Thyroid gland (tissue), 4 donors: ENCODE measurements at regions of chr10 and their contacts with region 1.

Region 1: DNA sequence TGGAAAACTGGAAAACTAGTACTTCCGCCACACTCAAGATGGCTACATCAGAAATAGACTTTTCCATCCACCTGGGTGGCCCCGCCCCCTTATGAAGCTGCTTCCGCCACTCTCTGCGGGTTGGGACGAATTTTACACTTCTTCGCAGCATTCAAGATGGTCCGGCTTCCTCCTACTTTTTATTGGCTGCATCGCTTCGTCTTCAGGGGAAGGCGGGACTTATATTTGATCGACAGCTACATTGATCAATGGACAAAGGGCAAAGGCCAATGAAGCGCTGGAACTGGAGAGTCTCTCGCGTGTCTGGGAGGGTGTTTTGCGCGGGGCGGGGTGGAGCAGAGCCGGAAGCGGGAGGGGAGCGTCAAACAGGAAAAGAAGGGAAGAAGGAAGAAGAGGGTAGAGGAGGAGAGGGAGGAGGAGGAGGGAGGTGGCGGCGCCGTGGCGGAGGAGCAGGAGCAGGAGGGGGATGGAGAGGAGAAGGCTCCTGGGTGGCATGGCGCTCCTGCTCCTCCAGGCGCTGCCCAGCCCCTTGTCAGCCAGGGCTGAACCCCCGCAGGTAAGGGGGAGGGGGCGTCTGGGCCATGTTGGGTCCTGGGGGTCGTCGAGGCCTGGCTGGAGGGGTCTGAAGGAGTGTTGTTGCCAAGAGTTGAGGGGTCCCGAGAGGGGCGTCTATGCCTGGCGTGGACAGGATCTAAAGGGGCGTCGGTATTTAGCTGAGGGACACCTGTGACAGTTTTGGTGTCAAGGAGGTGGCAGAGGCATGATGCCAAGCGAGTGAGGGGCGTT is at the start of gene WBP1L:
- DNase-seq: peak; percentile 97 to 98
- H3K4me3 ChIP-seq: peak within 1 kb of the TSS; percentile 43 to 74 (median 57)
- H3K27ac ChIP-seq: peak within 1 kb of the TSS; percentile 84 to 93 (median 90)
- H3K4me1 ChIP-seq: peaks cover 41 to 42% of the 10 kb centered on the region in 2 donors
- H3K27me3 ChIP-seq: no peaks in the 10 kb centered on the region
- CTCF ChIP-seq: peak in 1 of 6 experiments; percentile 14
- POLR2A ChIP-seq: peak; percentile 70 to 80
- total RNA-seq, gene WBP1L: 194 to 384 (median 314) TPM

Region 2: DNA sequence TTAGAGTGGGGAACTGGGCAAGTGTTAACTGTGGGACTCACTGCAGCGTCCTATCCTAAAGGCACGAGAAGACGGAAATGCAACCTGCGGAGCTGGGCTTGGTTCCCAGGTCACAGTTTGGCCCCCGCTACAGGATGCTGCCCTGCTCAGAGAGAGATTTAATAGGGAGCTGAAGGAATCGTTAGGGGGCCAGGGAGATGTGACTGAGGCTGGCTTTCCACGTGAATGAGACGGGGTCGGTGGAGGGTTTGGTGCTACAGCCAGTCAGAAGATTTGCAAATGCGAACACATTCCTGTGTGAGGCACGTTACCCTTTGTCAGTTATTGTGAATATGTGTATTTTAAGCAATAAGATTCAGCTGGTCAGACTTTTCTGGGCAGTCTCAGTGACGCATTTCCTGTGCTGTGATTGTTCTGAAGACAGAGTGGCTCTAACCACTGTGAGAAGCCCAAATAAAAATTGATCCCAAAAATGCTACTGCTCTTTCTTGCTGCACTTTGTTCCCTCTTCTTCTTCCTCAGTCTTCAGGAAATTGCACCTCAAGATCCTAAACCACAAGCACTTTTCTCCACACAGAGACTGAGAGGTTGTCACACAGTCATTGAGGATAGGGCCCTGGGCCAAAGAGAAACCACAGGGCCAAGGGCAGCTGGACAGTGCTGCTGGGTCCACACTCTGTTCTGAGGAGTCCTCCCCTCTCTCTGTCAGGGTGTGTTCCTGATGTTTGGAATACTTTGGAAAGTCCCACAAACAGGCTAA is 72.2 kb after region 1 on chr10:
- intact Hi-C with region 1: loop called (anchors 10 kb)
- DNase-seq: no peak
- H3K4me3 ChIP-seq: no peak overlapping the region
- H3K27ac ChIP-seq: peak overlapping the region; percentile 77 to 88 (median 78)
- H3K4me1 ChIP-seq: peaks cover 37 to 78% of the 10 kb centered on the region in 2 donors
- H3K27me3 ChIP-seq: no peaks in the 10 kb centered on the region
- CTCF ChIP-seq: no peak
- POLR2A ChIP-seq: peak in 1 of 2 donors; percentile 27